ENCODE measurements at regions of chr11 and their contacts with region 1.

Region 1: DNA sequence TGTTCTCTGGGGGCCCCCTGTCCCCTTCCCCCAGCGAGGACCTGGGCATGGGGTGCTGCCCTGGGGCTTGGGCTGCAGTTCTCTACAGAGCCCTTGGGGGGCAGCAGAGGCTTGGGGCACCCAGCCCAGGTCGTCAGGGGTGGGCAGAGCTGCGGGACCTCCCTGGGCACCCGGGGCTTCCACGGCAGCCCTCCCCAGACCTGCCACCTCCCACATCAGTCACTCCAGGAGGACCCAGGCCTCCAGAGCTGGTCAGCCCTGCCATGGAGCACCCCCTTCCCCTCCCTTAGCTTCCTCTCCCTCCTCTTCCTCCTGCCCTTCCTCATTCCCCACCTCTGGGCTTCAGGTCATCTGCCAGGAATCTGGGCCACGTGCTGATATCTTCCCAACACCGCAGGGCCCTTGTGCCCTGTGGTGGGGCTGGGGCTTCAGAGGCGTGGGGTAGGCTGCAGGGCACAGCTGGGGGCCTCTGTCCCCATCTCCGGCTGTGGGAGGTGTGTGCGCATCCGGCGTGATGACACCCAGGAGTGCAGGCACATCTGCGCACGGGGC is 5.8 kb downstream of the TSPAN4 start:
- DNase-seq: peak; percentile 76
- ATAC-seq: peak; percentile 75
- H3K4me3 ChIP-seq: peak overlapping the region in 1 of 5 experiments; percentile 51
- H3K4me3 Mint-ChIP-seq: peak overlapping the region; percentile 80
- H3K27ac ChIP-seq: no peak overlapping the region
- H3K27ac Mint-ChIP-seq: no peak overlapping the region
- H3K4me1 ChIP-seq: peaks cover 25 to 31% of the 10 kb centered on the region in 2 donors
- H3K4me1 Mint-ChIP-seq: peaks cover 18% of the 10 kb centered on the region
- H3K27me3 ChIP-seq: peaks cover 0 to 44% (median 10%) of the 10 kb centered on the region in 4 experiments
- H3K27me3 Mint-ChIP-seq: peaks cover 3% of the 10 kb centered on the region
- CTCF ChIP-seq: peak; percentile 92

Region 2: GRCh38 chr11:789943-790342 is 58.5 kb before region 1 on chr11 and contains the start of gene CEND1:
- CTCF ChIA-PET with region 1: no interaction called
- POLR2A ChIA-PET with region 1: no interaction called
- intact Hi-C with region 1: no loop called
- DNase-seq: peak; percentile 54
- ATAC-seq: peak; percentile 62
- H3K4me3 ChIP-seq: no peak within 1 kb of the TSS
- H3K4me3 Mint-ChIP-seq: peak within 1 kb of the TSS; percentile 16
- H3K27ac ChIP-seq: no peak within 1 kb of the TSS
- H3K27ac Mint-ChIP-seq: no peak within 1 kb of the TSS
- H3K4me1 ChIP-seq: peaks cover 10 to 21% of the 10 kb centered on the region in 2 donors
- H3K4me1 Mint-ChIP-seq: peaks cover 6% of the 10 kb centered on the region
- H3K27me3 ChIP-seq: peaks cover 0 to 24% (median 5%) of the 10 kb centered on the region in 4 experiments
- H3K27me3 Mint-ChIP-seq: no peaks in the 10 kb centered on the region
- CTCF ChIP-seq: no peak
- total RNA-seq, gene CEND1: 0.39 and 0.49 TPM in 2 replicates

Region 3: DNA sequence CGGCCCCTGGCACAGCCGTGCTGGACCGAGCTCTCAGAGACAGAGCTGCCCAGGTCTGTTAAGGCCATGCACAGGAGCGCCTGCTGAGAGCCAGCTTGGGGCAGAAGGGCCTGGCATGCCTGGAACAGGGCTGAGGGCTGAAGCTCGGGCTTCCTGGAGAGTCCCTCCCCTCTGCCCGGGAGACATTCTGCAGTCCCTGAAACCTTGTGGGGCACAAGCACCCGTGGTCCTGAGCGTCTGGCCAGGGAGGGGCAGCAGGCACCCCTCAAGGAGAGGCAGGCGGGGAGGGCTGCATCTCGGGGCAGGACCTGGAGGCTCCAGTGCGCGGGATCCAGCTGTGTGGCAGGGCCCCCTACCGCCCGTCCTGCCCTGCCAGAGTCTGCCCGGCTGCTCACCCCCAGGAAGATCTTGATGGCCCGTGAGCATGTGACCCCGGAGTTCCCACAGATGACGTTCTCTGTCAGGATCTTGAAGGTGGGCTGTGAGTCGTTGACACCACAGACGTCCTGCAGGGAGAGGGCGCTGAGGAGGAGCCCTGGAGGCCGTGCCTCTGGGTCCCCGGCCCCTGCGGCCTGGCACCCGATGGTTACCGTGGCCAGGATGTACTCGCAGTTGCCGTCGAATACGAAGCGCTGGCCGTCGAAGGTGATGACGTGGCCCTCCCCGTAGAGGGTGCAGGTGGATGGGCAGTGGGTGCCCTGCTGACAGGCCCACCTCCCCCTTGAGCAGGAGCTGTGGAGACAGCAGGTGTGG is 177.1 kb after region 1 on chr11:
- CTCF ChIA-PET with region 1: no interaction called
- POLR2A ChIA-PET with region 1: no interaction called
- intact Hi-C with region 1: no loop called
- DNase-seq: no peak
- ATAC-seq: no peak
- H3K4me3 ChIP-seq: no peak overlapping the region
- H3K4me3 Mint-ChIP-seq: no peak overlapping the region
- H3K27ac ChIP-seq: no peak overlapping the region
- H3K27ac Mint-ChIP-seq: no peak overlapping the region
- H3K4me1 ChIP-seq: no peaks in the 10 kb centered on the region
- H3K4me1 Mint-ChIP-seq: no peaks in the 10 kb centered on the region
- H3K27me3 ChIP-seq: no peaks in the 10 kb centered on the region
- H3K27me3 Mint-ChIP-seq: no peaks in the 10 kb centered on the region
- CTCF ChIP-seq: no peak

Region 4: DNA sequence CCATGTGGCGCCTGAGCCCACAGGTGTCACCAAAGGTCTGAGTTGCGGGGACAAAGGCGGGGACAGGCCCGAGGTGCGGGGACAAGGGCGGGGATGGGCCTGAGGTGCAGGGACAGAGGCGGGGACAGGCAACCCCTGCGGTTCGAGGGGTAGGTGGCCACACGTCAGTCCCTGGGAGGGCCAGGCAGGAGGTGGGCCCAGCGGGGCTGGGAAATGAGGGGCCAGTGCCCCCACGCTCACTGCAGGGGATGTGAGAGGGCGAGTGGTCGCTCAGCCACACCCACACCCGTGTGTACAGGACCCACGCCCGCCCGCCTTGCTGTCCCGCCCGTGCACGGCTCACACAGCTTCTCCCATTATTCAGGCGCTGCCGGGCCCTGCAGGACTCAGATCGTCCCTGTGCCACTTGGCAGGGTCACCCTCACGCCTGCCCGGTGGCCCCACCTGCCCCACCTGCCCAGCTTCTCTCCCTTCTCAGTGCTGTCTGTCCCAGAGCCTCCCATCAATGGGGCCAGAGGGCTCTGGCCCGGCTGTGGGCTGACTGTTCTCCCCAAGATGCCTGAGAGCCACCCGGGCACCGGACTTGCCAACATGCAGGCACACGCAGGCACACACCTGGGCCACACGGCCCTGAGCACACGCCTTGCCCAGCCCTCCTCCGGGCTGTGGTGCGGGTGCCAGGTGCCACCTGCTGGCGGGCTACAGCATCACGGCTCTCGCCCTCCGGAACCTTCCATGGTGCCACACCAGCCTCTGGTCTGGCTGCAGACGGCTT is 202.3 kb after region 1 on chr11:
- CTCF ChIA-PET with region 1: interaction called, 26 read pairs
- POLR2A ChIA-PET with region 1: interaction called, 3 read pairs
- intact Hi-C with region 1: no loop called
- DNase-seq: peak; percentile 77
- ATAC-seq: peak; percentile 96
- H3K4me3 ChIP-seq: no peak overlapping the region
- H3K4me3 Mint-ChIP-seq: no peak overlapping the region
- H3K27ac ChIP-seq: no peak overlapping the region
- H3K27ac Mint-ChIP-seq: no peak overlapping the region
- H3K4me1 ChIP-seq: peaks cover 4 to 6% of the 10 kb centered on the region in 2 donors
- H3K4me1 Mint-ChIP-seq: peaks cover 3% of the 10 kb centered on the region
- H3K27me3 ChIP-seq: peaks cover 0 to 27% (median 3%) of the 10 kb centered on the region in 4 experiments
- H3K27me3 Mint-ChIP-seq: peaks cover 15% of the 10 kb centered on the region
- CTCF ChIP-seq: peak; percentile 79